Activated T-helper 2 cell treated with anti-CD3 and anti-CD28 coated beads, Interferon-gamma antibody, Interleukin-2, Interleukin-4, amounts not matched to agents 10 μg/mL and 5 μg/mL and 100 μg/mL, durations not matched to agents 14 hours and 24 hours and 36 hours (primary cell): ENCODE measurements at regions of chr5 and their contacts with region 1.

Region 1: DNA sequence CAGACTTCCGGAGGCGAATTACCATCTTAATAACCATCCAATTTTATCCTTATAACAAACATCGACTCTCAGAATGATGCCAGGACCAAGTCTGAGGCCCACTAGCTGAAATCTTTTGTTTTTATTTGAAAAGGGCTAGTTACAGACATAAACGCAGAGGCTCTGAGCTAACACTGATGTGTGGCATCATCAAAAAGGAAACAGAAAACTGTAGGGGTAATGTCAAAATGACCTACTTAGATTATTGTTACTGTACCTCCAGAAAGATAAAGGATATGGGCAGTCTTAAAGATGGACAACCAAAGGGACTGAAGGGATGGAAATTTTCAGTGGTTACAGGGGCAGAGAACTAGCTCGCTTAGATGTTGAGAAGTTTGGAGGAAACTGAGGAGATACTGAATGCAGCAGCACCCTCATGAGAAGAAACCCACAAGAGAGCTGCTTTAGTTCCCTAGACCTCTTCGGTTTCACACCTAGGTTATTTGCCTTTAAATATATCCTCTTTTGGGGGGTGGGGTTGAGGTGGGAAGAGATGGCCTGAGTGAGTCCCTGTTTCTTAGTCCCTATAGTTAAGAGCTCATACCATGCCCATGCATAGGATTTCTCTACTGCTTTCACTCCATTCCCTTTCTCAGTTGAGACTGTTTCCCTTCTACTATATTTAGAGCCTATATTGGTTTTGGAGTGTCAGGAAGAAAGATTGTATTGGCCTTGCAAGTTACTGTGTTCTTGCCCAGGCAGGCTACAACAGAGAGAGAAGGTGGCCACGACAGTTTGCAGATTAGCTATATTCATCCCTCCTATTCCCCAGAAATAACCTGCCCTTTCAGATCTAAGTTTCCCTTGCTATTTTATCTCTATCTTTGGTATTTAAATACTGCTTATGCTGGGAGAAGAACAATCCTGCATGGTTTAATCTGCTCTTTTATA is 320.4 kb upstream of the EFNA5 start:
- DNase-seq: no peak
- H3K4me3 Mint-ChIP-seq: no peak overlapping the region
- H3K27ac Mint-ChIP-seq: no peak overlapping the region
- H3K4me1 Mint-ChIP-seq: peaks cover 13% of the 10 kb centered on the region
- H3K27me3 Mint-ChIP-seq: no peaks in the 10 kb centered on the region

Region 2: DNA sequence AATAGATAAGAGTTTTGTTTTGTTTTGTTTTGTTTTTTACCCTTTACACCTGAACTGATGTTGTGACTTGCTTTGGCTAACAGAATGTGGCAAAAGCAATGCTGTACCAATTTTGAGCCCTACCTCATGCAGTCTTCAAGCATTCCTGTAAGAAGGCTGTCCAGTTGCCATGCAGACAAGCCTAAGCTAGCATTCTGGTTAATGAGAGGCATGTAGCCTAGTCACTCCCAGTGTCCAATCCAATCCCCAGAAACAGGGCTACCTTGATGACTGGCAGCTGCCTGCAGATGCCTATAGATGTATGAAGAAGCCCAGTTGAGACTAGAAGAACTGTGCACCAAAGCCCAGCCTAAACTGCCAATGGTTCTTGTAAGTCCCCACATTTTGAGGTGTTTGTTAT is 311.0 kb before region 1 on chr5:
- intact Hi-C with region 1: loop called (anchors 5 kb)
- DNase-seq: no peak
- H3K4me3 Mint-ChIP-seq: no peak overlapping the region
- H3K27ac Mint-ChIP-seq: no peak overlapping the region
- H3K4me1 Mint-ChIP-seq: peaks cover 4% of the 10 kb centered on the region
- H3K27me3 Mint-ChIP-seq: peaks cover 39% of the 10 kb centered on the region